Gastrocnemius medialis (tissue), 4 donors: ENCODE measurements at regions of chr9 and their contacts with region 1.

Region 1: DNA sequence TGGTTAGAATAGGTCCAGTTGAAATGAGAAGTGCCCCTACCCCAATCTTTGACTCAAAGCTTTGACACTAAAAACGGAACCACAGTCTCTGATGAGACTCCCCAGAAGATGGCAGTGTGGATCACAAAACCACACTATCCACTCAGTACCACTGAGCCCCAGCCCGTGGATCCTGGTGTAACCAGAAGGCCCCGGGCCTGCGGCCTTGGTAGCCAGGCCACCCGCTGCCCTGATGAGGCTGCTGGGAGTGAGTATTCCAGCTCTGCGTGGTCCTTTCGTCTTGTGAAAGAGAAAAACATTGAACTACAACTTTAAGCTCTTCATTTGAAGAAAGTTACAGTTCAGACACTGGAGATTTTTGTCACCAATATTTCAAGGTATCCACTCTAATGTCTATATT is 42.2 kb upstream of the FBP1 start:
- DNase-seq: peak; percentile 54 to 64
- ATAC-seq: peak; percentile 96 to 99
- H3K4me3 ChIP-seq: no peak overlapping the region
- H3K27ac ChIP-seq: peak overlapping the region in 1 of 4 donors; percentile 44
- H3K4me1 ChIP-seq: no peaks in the 10 kb centered on the region
- H3K27me3 ChIP-seq: no peaks in the 10 kb centered on the region
- CTCF ChIP-seq: peak; percentile 46 to 77 (median 72)
- POLR2A ChIP-seq: no peak

Region 2: GRCh38 chr9:95073021-95073607 is 391.6 kb after region 1 on chr9:
- in situ Hi-C with region 1: no loop called
- intact Hi-C with region 1: loop called (anchors 10 kb)
- DNase-seq: peak; percentile 53 to 78
- ATAC-seq: peak; percentile 67 to 72
- H3K4me3 ChIP-seq: no peak overlapping the region
- H3K27ac ChIP-seq: peak overlapping the region; percentile 85 to 96 (median 91)
- H3K4me1 ChIP-seq: peaks cover 92 to 95% of the 10 kb centered on the region in 2 donors
- H3K27me3 ChIP-seq: no peaks in the 10 kb centered on the region
- CTCF ChIP-seq: peak in 4 of 5 experiments; percentile 18 to 54 (median 52)
- POLR2A ChIP-seq: no peak

Region 3: DNA sequence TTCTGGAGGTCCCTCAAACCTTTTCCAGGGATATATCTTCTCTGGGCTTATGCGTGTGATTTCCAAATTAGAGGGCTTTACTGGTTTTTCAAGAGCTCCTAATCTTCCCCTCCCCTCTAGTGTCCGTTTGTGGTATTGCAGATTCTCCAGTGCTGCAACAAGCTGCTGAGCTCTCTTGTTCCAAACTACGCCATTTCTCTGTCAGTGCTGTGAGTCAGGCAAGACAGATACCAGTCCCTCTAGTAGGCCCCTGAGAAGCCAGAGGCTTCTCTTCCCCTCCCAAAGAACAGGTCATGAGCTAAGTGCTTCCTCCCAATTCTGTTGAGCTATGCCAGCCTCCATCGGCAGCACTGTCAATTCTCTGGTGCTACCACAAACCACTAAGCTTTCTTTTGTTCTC is 486.5 kb after region 1 on chr9:
- in situ Hi-C with region 1: no loop called
- intact Hi-C with region 1: loop called (anchors 10 kb)
- DNase-seq: no peak
- ATAC-seq: peak in 1 of 2 donors; percentile 36
- H3K4me3 ChIP-seq: no peak overlapping the region
- H3K27ac ChIP-seq: no peak overlapping the region
- H3K4me1 ChIP-seq: peaks cover 8 to 9% of the 10 kb centered on the region in 2 donors
- H3K27me3 ChIP-seq: no peaks in the 10 kb centered on the region
- CTCF ChIP-seq: peak; percentile 38 to 75 (median 65)
- POLR2A ChIP-seq: no peak